Heart left ventricle (tissue), 16 donors: ENCODE measurements at regions of chr6 and their contacts with region 1.

Region 1: DNA sequence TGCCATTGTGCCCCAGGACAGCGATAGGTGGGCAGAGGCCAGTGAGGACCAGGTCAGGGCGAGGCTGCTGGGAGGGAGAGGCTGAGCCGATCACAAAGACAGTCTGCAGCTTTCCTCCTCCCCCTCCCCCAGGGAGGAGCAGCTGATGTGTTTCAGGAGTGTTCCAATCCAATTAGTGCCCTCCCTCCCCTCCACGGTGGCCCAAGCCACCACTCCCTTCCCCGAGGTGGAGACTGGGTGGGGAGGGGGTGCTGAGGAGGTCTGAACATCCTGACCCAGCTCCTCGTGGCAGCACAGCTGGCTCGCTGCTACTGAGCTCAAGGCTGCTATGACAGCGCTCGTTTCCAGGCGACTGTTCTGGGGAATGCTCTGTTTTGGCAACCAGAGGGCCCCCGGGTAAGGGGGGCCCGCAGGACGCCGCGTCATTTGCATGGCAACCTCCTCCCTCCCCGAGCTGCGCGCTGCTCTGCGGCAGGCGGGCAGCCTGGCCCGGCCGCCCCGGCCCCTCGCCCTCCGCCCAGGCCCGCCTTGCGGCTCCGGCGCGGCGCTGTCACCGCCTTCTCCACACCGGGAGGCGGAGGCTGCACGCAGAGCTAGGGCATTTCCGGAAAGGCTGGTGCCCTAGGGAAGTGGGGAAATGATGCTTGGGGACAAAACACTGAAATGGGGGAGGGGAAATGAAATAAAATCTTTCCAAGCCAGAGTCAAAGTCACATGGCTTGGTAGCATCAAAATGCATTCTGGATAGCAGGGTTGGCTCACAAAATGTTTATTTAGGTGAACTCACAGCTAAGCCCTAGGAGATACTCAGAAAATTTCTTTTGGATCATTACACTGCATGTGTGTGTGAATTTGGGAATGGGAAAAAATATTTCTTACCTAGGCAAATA is 67.4 kb upstream of the PIM1 start:
- DNase-seq: peak; percentile 85 to 95 (median 90)
- ATAC-seq: peak; percentile 92 to 96 (median 95)
- H3K4me3 ChIP-seq: peak overlapping the region; percentile 2 to 64 (median 49)
- H3K27ac ChIP-seq: peak overlapping the region; percentile 57 to 93 (median 83)
- H3K4me1 ChIP-seq: peaks cover 8 to 37% (median 19%) of the 10 kb centered on the region in 12 donors
- H3K27me3 ChIP-seq: no peaks in the 10 kb centered on the region
- CTCF ChIP-seq: peak in 1 of 12 donors; percentile 29
- POLR2A ChIP-seq: peak in 1 of 2 donors; percentile 52

Region 2: DNA sequence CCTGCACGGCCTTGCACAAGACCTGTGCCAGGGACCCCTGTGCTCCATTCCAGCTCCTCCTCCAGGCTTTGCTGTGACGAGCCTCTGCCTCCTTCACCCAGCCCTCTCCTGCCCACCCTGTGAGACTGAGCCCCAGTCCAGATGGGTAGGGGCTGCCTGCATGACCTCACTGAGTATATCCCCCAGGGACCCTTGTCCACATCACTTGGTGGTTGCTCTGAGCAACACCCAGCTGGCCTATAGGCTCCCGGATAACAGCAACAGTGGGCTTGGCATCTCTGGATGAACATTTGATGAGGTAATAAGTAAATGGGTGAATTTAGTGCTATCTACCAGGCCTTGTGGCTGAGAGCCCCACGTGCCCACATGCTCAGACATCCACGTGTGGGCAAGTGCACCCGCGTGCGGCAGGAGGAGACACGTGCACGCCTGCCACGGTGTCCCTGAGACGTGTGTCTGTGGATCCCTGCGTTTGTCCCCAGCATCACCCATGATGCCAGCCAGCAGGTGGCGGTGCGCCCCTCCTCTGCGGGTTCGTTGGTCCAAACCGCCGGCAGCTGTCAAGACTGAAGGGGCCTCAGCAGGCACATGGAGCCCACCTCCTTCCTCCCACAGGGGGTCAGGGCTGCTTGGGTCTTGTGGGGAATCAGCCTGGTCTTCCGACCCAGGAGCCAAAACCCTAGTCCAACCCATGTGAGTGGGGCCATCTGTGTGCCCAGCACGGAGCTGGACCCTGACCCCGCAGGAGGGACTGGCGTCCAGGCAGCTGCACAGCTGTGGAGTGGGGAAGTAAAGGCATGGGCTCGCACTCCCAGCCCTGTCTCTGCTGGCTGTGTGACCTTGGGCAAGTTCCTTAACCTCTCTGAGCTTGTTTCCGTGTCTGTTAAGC is 51.1 kb before region 1 on chr6:
- intact Hi-C with region 1: loop called in 3 of 10 experiments (anchors 2 to 10 kb)
- DNase-seq: peak; percentile 89 to 95 (median 90)
- ATAC-seq: peak; percentile 41 to 86 (median 81)
- H3K4me3 ChIP-seq: peak overlapping the region in 1 of 12 donors; percentile 36
- H3K27ac ChIP-seq: peak overlapping the region in 2 of 12 donors; percentile 32 to 93
- H3K4me1 ChIP-seq: peaks cover 0 to 55% (median 14%) of the 10 kb centered on the region in 12 donors
- H3K27me3 ChIP-seq: no peaks in the 10 kb centered on the region
- CTCF ChIP-seq: peak; percentile 82 to 96 (median 90)
- POLR2A ChIP-seq: no peak

Region 3: GRCh38 chr6:37131104-37131959 is 28.8 kb after region 1 on chr6:
- intact Hi-C with region 1: loop called in 1 of 10 experiments (anchors 1 kb)
- DNase-seq: peak; percentile 75 to 94 (median 82)
- ATAC-seq: peak; percentile 78 to 92 (median 88)
- H3K4me3 ChIP-seq: peak overlapping the region in 1 of 12 donors; percentile 19
- H3K27ac ChIP-seq: peak overlapping the region; percentile 48 to 93 (median 78)
- H3K4me1 ChIP-seq: peaks cover 0 to 45% (median 22%) of the 10 kb centered on the region in 12 donors
- H3K27me3 ChIP-seq: no peaks in the 10 kb centered on the region
- CTCF ChIP-seq: no peak
- POLR2A ChIP-seq: no peak

Region 4: GRCh38 chr6:37663019-37663810 is 560.7 kb after region 1 on chr6:
- intact Hi-C with region 1: no loop called
- DNase-seq: no peak
- ATAC-seq: peak in 1 of 4 donors; percentile 26
- H3K4me3 ChIP-seq: no peak overlapping the region
- H3K27ac ChIP-seq: no peak overlapping the region
- H3K4me1 ChIP-seq: peaks cover 0 to 6% (median 0%) of the 10 kb centered on the region in 12 donors
- H3K27me3 ChIP-seq: no peaks in the 10 kb centered on the region
- CTCF ChIP-seq: no peak
- POLR2A ChIP-seq: no peak